HEK293T (cell line): ENCODE measurements at regions of chr12 and their contacts with region 1.

Region 1: DNA sequence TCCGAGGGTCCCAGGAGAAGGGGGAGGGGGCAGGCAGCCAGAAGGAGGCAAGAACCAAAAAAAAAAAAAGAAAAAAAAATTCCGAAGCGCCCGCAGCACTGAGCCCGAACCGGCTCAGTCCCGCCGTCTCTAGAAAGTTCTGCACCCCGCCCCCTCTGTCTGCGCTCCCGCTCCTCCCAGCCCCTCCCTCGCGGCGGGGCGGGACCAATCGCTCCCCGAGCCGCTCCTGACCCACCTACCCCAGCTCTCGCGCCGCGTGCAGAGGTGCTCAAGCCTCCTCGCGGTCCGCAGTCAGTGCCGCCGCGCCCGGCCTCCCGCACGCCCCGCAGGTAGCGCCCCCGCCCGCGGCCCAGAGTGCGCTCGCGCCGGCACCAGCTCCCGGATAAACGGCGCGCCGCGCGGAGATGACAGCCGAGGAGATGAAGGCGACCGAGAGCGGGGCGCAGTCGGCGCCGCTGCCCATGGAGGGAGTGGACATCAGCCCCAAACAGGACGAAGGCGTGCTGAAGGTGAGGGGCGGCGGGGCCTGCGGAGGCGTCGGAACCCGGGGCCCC is at the start of gene FKBP4:
- DNase-seq: peak; percentile 88

Region 2: GRCh38 chr12:2783936-2784600 is 10.7 kb before region 1 on chr12:
- CTCF ChIA-PET with region 1: interaction called, 3 read pairs
- POLR2A ChIA-PET with region 1: interaction called, 12 read pairs
- DNase-seq: peak; percentile 81

Region 3: DNA sequence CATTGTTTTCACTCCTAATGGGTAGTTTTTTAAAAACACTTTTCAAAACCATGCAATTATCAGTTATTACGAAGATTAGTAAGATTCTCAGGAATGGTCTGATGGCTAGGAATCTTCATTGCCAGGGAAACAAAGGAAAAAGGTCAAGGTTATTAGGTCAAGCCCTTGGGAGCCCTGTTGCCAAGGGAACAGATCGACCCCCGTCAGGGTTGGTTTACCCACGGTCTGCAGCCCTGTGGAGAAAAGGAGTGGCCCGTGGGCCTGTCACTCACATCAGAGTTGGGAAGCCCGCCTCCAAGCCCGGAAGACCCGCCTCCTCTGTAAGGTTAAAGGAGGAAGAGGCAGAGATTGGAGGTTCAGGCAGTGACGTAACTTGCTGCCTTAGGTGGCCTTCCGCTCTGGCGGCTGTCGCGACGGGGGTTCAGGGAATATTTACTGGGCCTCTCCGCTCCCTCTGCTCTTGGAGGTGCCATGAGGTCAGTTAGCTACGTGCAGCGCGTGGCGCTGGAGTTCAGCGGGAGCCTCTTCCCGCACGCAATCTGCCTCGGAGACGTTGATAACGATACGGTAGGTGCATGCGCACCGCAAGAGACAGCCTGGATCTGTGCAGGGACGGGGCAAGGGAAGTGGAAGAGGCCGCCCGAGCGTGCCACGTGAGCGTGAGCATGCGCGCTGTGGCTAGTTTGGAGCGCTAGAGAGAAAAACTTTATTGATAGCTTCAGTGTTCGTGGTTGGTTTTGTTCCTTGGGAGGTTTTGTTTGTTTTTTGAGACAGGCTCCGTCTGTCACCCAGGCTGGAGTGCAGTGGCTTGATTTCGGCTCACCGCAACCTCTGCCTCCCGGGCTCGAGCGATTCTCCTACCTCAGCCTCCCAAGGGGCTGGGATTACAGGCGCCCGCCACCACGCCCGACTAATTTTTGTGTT is 17.7 kb after region 1 on chr12 and contains the start of gene ITFG2:
- CTCF ChIA-PET with region 1: no interaction called
- POLR2A ChIA-PET with region 1: interaction called, 11 read pairs
- DNase-seq: peak; percentile 94

Region 4: GRCh38 chr12:2826721-2827515 is 32.1 kb after region 1 on chr12:
- CTCF ChIA-PET with region 1: no interaction called
- POLR2A ChIA-PET with region 1: no interaction called
- DNase-seq: no peak